ENCODE measurements at regions of chr15 and their contacts with region 1.

Region 1: DNA sequence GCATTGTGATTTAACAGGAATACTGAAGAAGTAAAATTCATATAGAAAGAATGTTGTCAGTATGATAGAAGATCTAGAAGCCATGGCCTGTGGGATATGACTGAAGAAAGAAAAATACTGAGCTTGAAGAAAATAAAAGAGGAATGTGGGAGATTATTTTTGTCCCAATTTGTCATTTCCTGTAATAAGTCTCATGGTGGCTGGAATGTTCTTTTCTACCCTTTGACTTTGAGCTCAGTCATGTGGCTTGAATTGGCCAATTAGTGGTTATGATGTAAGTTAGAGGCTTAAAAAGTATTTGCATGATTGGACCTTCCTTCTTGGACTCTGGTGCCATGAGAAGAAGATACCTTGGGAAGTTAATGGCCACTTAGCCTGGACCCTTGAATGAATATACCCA is 14.1 kb downstream of the APH1B start:
- DNase-seq: no peak
- H3K4me3 ChIP-seq: no peak overlapping the region
- H3K27ac ChIP-seq: peak overlapping the region in 1 of 4 donors; percentile 13
- H3K4me1 ChIP-seq: peaks cover 0 to 6% (median 0%) of the 10 kb centered on the region in 3 donors
- H3K27me3 ChIP-seq: no peaks in the 10 kb centered on the region
- CTCF ChIP-seq: no peak
- POLR2A ChIP-seq: no peak

Region 2: DNA sequence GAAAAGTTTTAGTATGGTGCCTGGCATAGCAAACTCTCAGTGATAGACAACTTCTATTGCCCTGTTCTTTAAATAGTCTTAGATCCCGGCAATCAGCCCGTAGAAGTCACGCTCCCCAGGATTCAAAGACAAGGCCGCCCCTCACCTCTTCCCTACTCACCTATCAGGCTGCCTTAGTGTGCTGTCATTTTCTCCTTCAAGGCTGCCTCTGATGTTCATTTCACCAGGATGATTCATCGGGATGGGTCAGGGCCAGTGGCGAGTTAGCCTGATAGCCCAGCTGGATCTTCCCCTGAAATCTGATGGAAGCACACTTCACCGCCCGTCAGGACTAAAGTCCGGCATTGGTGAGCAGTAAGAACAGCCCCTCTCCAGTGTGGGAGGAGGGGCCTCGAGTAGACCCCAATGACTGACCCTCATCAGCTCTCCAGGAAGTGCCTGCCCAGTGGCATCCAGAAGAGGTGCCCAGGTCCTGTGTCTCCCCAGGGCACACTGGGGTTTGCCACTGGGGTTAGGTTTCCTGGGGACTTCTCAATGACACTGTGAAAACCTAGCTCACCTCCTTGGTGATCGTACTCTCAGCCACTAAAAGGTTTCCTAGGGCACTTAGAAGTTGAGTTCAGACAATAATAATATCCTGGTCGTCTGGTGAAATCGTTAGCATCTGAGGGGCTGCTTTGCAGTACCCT is 211.4 kb before region 1 on chr15:
- intact Hi-C with region 1: no loop called
- DNase-seq: no peak
- H3K4me3 ChIP-seq: no peak overlapping the region
- H3K27ac ChIP-seq: peak overlapping the region in 2 of 4 donors; percentile 19 to 22
- H3K4me1 ChIP-seq: peaks cover 0 to 15% (median 0%) of the 10 kb centered on the region in 3 donors
- H3K27me3 ChIP-seq: peaks cover 0 to 7% (median 0%) of the 10 kb centered on the region in 4 donors
- CTCF ChIP-seq: no peak
- POLR2A ChIP-seq: no peak

Region 3: GRCh38 chr15:63402498-63403253 is 111.2 kb after region 1 on chr15:
- intact Hi-C with region 1: loop called (anchors 5 kb)
- DNase-seq: no peak
- H3K4me3 ChIP-seq: no peak overlapping the region
- H3K27ac ChIP-seq: no peak overlapping the region
- H3K4me1 ChIP-seq: peaks cover 0 to 3% (median 0%) of the 10 kb centered on the region in 3 donors
- H3K27me3 ChIP-seq: no peaks in the 10 kb centered on the region
- CTCF ChIP-seq: peak; percentile 49 to 78 (median 64)
- POLR2A ChIP-seq: no peak

Region 4: DNA sequence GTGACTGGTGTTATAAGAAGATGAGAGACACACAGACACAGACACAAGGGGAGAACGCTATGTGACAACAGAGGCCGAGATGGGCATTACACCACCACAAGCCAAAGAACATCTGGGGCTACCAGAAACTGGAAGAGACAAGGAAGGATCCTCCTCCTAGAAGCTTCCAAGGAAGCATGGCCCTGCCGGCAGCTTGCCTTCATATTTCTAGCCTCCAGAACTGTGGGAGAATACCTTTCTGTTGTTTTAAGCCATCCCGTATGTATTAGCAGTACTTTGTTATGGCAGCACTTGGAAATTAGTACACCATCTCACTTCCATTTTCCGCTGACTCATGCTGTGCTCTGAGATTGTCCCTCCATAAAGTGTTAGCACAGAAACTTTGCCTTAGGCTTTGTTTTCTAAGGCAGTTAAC is 128.8 kb after region 1 on chr15:
- intact Hi-C with region 1: no loop called
- DNase-seq: no peak
- H3K4me3 ChIP-seq: no peak overlapping the region
- H3K27ac ChIP-seq: no peak overlapping the region
- H3K4me1 ChIP-seq: peaks cover 0 to 4% (median 0%) of the 10 kb centered on the region in 3 donors
- H3K27me3 ChIP-seq: no peaks in the 10 kb centered on the region
- CTCF ChIP-seq: no peak
- POLR2A ChIP-seq: no peak